Heart right ventricle (tissue), 16 donors: ENCODE measurements at regions of chr20 and their contacts with region 1.

Region 1: DNA sequence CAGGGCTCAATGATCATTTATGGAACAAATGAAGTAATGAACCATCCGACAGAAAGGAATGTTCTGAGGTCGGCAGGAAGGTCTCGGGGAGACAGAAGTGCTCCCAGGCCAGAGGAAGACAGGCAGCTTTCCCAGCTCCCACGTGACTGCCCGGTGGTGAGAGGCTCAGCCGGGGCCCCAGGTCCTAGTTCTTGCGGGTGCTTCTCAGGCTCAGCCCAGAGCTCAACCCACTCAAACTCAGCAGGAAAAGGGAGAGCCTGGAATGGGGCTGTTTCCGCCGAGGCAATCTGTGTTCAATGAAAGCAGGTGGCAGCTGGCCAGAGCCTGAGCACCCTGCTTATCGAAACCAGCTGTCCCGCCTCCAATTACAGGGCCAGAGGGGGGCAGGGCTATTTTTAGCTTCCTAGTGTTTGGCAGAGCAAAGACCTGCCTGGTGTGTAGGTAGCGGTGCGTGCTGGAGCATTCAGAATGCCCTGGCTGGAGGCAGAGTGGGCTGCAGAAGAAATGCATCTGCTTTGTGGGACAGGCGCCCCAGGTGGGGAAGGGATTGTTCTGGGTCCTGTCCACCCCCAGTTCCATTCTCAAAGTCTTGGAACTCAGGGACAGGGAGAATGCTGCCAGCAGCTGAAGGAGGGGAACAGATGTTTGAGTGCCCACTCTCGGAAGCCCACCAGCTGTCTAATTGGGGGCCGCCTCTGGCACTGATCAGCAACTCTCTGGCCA is 145.1 kb downstream of the PREX1 start:
- DNase-seq: peak; percentile 84 to 91
- ATAC-seq: peak; percentile 82 to 93 (median 88)
- H3K4me3 ChIP-seq: peak overlapping the region in 5 of 10 donors; percentile 16 to 25 (median 23)
- H3K27ac ChIP-seq: peak overlapping the region; percentile 1 to 81 (median 69)
- H3K4me1 ChIP-seq: peaks cover 24 to 65% (median 59%) of the 10 kb centered on the region in 9 donors
- H3K27me3 ChIP-seq: no peaks in the 10 kb centered on the region
- CTCF ChIP-seq: no peak

Region 2: GRCh38 chr20:48556956-48557355 is 125.7 kb before region 1 on chr20:
- intact Hi-C with region 1: no loop called
- DNase-seq: no peak
- ATAC-seq: no peak
- H3K4me3 ChIP-seq: no peak overlapping the region
- H3K27ac ChIP-seq: no peak overlapping the region
- H3K4me1 ChIP-seq: no peaks in the 10 kb centered on the region
- H3K27me3 ChIP-seq: peaks cover 0 to 11% (median 5%) of the 10 kb centered on the region in 7 donors
- CTCF ChIP-seq: no peak

Region 3: DNA sequence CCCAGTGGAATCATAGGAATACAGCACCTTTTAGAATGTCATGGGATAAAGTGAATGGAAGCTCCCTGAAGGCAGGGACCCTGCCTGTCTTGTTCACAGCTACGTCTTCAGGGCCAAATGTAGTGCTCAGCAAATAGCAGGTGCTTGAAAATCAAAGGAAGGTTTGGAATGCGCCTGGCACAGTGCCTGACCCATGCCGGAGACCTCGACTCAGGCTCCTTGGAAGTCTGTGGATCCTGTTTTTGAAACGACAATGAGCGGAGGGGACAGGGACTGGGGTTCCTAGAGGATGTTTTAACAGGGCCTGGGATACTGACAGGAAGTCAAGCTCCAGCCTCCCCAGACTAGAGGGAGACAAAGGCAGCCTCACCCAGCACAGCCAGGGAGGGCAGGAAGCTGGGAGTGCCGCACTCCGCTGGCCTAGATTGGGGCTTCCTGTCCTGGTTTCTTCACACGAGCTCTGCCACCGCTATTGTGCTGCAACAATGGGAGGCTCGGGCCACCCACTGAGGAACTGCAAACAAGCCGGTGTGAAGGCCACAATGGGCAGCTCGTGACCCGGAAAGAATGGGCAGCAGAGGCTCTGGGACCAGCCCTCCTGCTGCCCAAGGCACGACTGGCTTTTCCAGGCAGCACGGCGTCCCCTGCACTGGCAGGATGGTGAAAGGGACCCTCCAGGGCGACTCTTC is 68.4 kb after region 1 on chr20:
- intact Hi-C with region 1: loop called in 2 of 10 experiments (anchors 2 to 5 kb)
- DNase-seq: peak; percentile 66 to 73
- ATAC-seq: peak; percentile 82 to 93 (median 90)
- H3K4me3 ChIP-seq: peak overlapping the region in 1 of 10 donors; percentile 1
- H3K27ac ChIP-seq: peak overlapping the region in 9 of 10 donors; percentile 36 to 85 (median 75)
- H3K4me1 ChIP-seq: peaks cover 0 to 82% (median 18%) of the 10 kb centered on the region in 9 donors
- H3K27me3 ChIP-seq: no peaks in the 10 kb centered on the region
- CTCF ChIP-seq: peak in 2 of 9 donors; percentile 25 to 36

Region 4: DNA sequence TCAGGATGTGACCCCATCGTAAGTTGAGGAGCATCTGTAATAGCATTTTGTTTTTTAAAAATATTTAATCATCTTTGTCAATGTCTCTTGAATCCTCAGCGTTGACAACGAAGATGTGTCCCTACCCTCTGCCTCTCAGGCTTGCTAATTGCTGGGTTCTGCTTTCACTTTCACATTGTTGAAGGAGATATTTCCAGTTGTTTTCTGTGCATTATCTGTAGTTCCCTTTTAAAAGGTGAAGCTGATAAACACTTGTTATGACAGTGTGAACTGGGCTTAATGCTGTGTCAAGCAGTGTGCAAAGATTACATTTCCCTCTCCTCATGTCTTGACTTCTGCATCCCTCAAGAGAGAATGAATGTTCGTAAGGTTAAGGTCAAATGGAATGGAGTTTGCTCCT is 418.3 kb after region 1 on chr20:
- intact Hi-C with region 1: no loop called
- DNase-seq: no peak
- ATAC-seq: no peak
- H3K4me3 ChIP-seq: no peak overlapping the region
- H3K27ac ChIP-seq: peak overlapping the region in 2 of 10 donors; percentile 3 to 63
- H3K4me1 ChIP-seq: peaks cover 0 to 13% (median 0%) of the 10 kb centered on the region in 9 donors
- H3K27me3 ChIP-seq: no peaks in the 10 kb centered on the region
- CTCF ChIP-seq: no peak

Region 5: DNA sequence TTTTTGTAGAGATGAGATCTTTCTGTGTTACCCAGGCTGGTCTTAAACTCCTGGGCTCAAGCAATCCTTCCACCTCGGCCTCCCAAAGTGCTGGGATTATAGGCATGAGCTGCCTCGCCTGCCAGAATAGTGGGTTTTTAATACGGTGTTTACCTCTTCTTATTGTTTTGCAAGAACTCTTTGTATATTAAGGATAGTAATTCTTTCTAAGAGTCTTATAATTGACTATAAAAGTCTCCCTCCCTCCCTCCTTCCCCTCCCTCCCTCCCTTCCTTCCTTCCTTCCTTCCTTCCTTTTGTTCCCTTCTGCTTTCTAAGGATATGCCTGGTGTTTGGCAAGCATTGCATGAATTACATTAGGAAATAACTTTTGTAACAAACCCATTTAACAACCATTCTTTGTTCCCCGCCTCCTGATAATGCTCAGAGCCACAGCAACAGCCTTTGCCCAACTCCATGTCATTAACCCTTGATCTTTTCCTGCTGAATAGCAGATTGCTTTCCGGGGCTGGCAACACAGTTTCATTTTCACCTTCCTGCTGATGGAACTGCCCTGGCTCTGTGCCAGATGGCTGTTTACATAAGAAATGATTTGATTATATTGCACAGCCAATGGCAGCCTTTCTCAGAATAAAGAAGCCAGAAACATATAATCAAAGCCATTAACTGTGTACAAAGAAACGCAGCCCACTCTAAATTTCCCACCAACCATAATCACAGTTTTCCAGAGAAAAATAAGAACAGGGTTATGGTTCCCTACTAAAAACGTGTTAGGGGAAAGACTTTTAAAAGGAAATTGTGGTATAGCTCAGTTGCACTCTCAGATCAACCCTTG is 1683.8 kb after region 1 on chr20:
- intact Hi-C with region 1: no loop called
- DNase-seq: peak; percentile 37 to 48
- ATAC-seq: peak in 3 of 8 donors; percentile 33 to 60 (median 45)
- H3K4me3 ChIP-seq: no peak overlapping the region
- H3K27ac ChIP-seq: peak overlapping the region in 1 of 10 donors; percentile 1
- H3K4me1 ChIP-seq: peaks cover 0 to 17% (median 2%) of the 10 kb centered on the region in 9 donors
- H3K27me3 ChIP-seq: no peaks in the 10 kb centered on the region
- CTCF ChIP-seq: no peak